Adrenal gland (tissue), 19 donors: ENCODE measurements at regions of chr6 and their contacts with region 1.

Region 1: GRCh38 chr6:43386492-43386891 is 17.0 kb upstream of the ZNF318 start:
- DNase-seq: no peak
- H3K4me3 ChIP-seq: no peak overlapping the region
- H3K27ac ChIP-seq: no peak overlapping the region
- H3K4me1 ChIP-seq: no peaks in the 10 kb centered on the region
- H3K27me3 ChIP-seq: no peaks in the 10 kb centered on the region
- CTCF ChIP-seq: peak in 3 of 6 experiments; percentile 43 to 67 (median 55)
- POLR2A ChIP-seq: no peak

Region 2: DNA sequence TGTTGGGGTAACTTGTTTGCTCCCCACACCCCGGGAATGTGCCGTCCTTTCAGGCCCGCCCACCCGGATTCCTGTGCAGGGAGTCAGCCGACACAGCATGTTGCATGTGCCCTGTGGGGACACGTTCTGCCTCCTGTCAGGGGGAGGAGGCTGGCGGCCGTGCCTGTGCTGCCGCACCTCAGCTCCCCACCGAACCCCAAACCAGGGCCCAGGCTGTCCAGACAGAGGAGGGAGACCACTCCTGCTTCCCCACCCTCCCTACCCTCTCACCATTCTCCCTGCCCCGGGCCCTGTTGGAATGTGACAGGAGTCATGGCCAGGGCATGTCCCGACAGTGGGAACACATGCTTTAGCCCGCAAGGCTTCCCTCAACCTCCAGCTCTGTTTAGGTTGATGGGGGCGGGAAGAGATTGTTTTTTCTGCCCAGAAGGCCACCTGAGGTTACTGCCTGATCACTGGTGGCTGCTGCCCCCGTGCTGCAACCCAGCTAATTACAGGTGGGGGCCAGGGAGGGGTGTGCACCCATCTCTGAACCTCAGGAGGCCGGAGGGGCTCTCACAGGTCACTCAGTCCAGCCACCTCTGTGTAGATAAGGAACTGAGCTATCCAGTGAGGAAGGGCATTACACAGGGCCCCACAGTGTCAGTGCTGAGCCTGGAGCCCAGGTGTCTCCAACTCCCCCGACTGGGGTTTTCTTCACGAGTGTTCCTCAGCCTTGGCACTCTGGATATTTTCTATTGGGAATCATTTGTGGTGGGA is 110.1 kb after region 1 on chr6:
- intact Hi-C with region 1: loop called (anchors 5 to 10 kb)
- DNase-seq: peak in 6 of 7 donors; percentile 40 to 67 (median 50)
- H3K4me3 ChIP-seq: no peak overlapping the region
- H3K27ac ChIP-seq: peak overlapping the region in 1 of 5 donors; percentile 13
- H3K4me1 ChIP-seq: peaks cover 24 to 29% of the 10 kb centered on the region in 2 donors
- H3K27me3 ChIP-seq: no peaks in the 10 kb centered on the region
- CTCF ChIP-seq: peak; percentile 46 to 67 (median 62)
- POLR2A ChIP-seq: no peak

Region 3: DNA sequence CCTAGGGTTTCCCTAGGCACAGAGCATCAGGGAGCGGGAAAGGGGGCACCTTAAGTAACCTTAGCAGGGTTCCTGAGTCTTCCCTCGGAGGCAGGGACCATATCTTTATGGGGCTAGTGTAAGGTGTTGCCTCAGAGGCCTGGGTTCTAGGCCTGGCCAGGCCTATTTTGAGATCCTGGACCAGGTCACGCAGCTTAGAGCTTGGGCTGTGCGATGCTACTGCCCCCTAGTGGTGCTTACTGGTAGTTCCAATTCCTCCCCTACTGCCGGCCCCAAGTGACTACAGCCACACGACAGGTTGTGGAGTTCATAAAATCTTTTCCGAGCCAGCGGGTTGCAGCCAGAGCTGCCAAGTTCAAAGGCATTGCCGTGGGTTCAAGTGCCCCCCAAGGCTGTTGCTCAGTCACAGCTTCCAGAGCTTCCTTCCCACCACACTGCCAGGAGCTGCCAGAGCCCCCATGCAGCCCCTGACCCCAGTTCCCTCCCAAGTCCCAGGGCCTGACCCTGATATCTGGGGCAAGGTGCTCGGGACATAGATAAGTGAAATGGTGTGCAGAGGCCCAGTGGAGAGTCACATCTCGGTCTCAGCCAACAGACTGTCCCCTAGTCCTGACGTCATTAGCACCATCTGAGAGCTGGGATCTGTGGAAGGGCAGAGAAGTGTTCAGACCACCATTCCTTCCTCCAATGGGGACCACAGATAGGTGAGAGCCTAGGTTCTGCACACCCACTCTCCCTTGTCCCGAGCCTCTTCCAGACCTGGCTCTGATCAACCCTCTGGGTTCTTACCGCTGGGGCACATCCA is 120.4 kb after region 1 on chr6:
- intact Hi-C with region 1: loop called (anchors 5 to 10 kb)
- DNase-seq: peak; percentile 80 to 95 (median 86)
- H3K4me3 ChIP-seq: no peak overlapping the region
- H3K27ac ChIP-seq: peak overlapping the region in 3 of 5 donors; percentile 27 to 70 (median 64)
- H3K4me1 ChIP-seq: peaks cover 18% of the 10 kb centered on the region in 2 donors
- H3K27me3 ChIP-seq: no peaks in the 10 kb centered on the region
- CTCF ChIP-seq: peak; percentile 96 to 98 (median 96)
- POLR2A ChIP-seq: no peak